Gastrocnemius medialis (tissue), 4 donors: ENCODE measurements at regions of chr19 and their contacts with region 1.

Region 1: DNA sequence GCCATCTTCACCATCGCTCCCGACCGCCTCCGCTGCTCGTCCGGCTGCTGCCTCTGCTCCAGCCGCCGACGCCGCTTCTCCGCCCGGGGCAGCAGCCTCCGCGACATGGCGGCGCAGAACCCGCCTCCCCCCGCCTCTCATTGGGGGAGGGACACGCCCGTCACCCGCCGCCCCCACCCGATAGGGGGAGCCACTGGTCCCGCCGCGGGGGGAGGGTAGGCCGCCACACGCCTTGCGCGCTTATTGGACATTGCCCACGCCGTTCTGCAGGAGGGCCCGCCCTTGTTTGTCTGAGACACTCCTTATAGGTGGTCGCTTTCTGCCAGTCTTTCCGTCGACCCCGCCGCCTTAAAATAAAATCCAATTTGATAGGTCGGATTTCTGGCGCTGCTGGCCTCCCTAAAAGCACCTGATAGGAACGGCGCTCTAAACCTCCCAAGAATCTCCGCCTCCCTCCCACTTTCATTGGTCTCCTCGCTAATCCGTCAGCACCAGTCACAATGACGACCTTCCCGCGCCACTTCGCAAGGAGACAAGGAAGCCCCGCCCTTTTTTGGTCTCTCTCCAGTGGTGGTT is at the start of gene HNRNPL:
- DNase-seq: peak in 1 of 2 donors; percentile 100
- ATAC-seq: peak in 1 of 2 donors; percentile 80
- H3K4me3 ChIP-seq: peak within 1 kb of the TSS; percentile 63 to 99 (median 92)
- H3K27ac ChIP-seq: peak within 1 kb of the TSS; percentile 98 to 100 (median 100)
- H3K4me1 ChIP-seq: peaks cover 45 to 52% of the 10 kb centered on the region in 2 donors
- H3K27me3 ChIP-seq: no peaks in the 10 kb centered on the region
- CTCF ChIP-seq: peak in 4 of 5 experiments; percentile 47 to 69 (median 55)
- POLR2A ChIP-seq: peak; percentile 98
- total RNA-seq, gene HNRNPL: 88.3 to 172 (median 126) TPM

Region 2: GRCh38 chr19:38374429-38375176 is 475.3 kb before region 1 on chr19 and contains the start of gene PSMD8:
- in situ Hi-C with region 1: loop called in 1 of 4 experiments (anchors 25 kb)
- intact Hi-C with region 1: no loop called
- DNase-seq: peak; percentile 99 to 100
- ATAC-seq: peak; percentile 81 to 88
- H3K4me3 ChIP-seq: peak within 1 kb of the TSS; percentile 91 to 99 (median 96)
- H3K27ac ChIP-seq: peak within 1 kb of the TSS; percentile 97 to 100 (median 98)
- H3K4me1 ChIP-seq: peaks cover 16 to 25% of the 10 kb centered on the region in 2 donors
- H3K27me3 ChIP-seq: no peaks in the 10 kb centered on the region
- CTCF ChIP-seq: peak in 3 of 5 experiments; percentile 6 to 34 (median 16)
- POLR2A ChIP-seq: peak; percentile 99
- total RNA-seq, gene PSMD8: 819 to 1,400 (median 1,309) TPM

Region 3: DNA sequence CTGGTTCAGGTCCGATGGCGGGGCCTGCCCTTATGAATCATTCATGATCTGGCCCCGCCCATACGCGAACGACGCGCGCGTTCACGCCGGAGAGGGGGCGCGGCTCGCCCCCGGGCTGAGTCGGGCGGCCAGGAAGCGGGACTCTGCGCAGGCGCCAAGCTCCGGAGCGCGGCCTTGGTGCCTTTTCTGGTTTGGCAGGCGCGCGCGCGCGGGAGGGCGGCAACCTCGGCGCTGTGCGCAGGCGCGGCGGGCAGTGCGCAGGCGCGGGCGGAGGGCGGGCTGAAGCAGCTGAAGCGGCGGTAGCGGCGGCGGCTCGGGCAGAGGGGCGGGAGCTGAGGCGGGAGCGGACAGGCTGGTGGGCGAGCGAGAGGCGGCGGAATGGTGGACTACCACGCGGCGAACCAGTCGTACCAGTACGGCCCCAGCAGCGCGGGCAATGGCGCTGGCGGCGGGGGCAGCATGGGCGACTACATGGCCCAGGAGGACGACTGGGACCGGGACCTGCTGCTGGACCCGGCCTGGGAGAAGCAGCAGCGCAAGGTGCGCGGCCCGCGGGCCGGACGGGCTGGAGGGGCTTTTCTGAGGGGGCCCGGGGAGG is 202.5 kb before region 1 on chr19 and contains the start of gene ACTN4:
- in situ Hi-C with region 1: loop called in 1 of 4 experiments (anchors 25 kb)
- intact Hi-C with region 1: no loop called
- DNase-seq: peak; percentile 97 to 98
- ATAC-seq: peak; percentile 68 to 81
- H3K4me3 ChIP-seq: peak within 1 kb of the TSS; percentile 90 to 100 (median 100)
- H3K27ac ChIP-seq: peak within 1 kb of the TSS; percentile 98 to 100 (median 99)
- H3K4me1 ChIP-seq: peaks cover 36 to 41% of the 10 kb centered on the region in 2 donors
- H3K27me3 ChIP-seq: no peaks in the 10 kb centered on the region
- CTCF ChIP-seq: no peak
- POLR2A ChIP-seq: peak; percentile 100
- total RNA-seq, gene ACTN4: 32.0 to 85.3 (median 63.9) TPM

Region 4: DNA sequence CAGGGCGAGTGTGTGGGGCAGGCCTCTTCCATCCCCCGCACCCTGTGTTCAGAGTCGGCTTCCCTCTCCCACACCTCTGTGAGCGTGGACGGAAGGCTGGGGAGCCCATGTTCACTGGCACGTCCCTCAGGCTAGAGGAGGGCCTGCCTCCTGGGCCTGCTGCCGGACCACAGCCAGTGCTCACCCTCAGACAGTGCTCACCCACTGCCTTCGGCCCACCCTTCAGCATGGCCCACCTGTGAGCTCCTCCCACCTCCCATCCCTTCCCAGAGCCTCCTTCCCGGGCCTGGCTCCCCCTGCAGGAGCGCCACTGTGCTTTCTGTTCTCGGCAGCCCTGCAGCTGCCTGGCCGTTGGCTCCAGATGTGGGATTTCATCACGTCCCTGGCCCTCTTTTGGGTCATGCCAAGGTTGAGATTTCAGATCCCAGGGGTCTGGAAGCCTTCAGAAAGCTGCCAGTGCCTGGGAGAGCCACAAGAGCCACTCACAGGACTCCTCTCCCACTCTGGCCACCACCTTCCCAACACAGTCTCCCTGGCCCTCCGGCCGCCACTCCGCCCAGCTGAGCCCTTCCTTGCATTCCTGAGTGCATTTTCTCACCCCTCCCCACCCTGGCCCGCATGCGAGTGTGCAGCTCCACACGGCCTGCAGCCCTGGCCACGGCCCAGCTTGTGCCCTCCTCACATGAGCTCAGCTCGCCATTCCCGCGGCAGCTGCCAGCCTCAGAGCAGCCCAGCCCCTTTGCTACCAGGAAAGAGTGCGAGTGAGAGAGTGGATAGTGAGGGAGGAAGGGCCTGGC is 131.0 kb before region 1 on chr19:
- in situ Hi-C with region 1: no loop called
- intact Hi-C with region 1: no loop called
- DNase-seq: peak in 1 of 2 donors; percentile 53
- ATAC-seq: peak in 1 of 2 donors; percentile 31
- H3K4me3 ChIP-seq: no peak overlapping the region
- H3K27ac ChIP-seq: peak overlapping the region; percentile 51 to 78 (median 60)
- H3K4me1 ChIP-seq: peaks cover 30 to 31% of the 10 kb centered on the region in 2 donors
- H3K27me3 ChIP-seq: no peaks in the 10 kb centered on the region
- CTCF ChIP-seq: peak in 4 of 5 experiments; percentile 16 to 42 (median 26)
- POLR2A ChIP-seq: no peak

Region 5: DNA sequence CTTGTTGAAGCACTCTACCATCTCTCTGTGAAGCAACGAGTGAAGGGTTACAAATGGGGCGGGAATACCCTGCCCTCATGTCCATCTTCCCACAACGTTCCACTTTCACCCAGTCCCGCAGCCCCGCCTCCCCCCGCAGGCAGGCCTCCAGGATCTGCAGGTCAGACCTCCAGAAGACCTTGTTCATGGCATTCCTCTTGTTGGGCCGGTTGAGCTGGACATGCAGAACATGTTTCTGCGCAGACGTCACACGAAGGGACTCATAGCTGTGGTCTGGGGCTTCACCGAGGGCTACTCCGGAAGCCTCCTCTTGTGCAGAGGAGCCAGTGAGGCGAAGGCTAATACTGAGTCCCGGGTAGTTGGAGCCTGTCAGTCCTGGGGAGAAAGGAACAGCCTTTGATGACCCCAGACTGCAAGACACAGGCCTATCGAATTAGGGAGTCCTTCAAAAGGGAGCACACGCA is 18.8 kb before region 1 on chr19:
- in situ Hi-C with region 1: no loop called
- intact Hi-C with region 1: loop called (anchors 1 kb)
- DNase-seq: peak in 1 of 2 donors; percentile 81
- ATAC-seq: peak; percentile 23 to 24
- H3K4me3 ChIP-seq: peak overlapping the region; percentile 63 to 83 (median 74)
- H3K27ac ChIP-seq: peak overlapping the region; percentile 91 to 100 (median 98)
- H3K4me1 ChIP-seq: peaks cover 49 to 60% of the 10 kb centered on the region in 2 donors
- H3K27me3 ChIP-seq: no peaks in the 10 kb centered on the region
- CTCF ChIP-seq: no peak
- POLR2A ChIP-seq: no peak

Region 6: GRCh38 chr19:38869856-38870607 is 20.1 kb after region 1 on chr19:
- in situ Hi-C with region 1: no loop called
- intact Hi-C with region 1: loop called (anchors 1 kb)
- DNase-seq: peak in 1 of 2 donors; percentile 79
- ATAC-seq: peak; percentile 64 to 79
- H3K4me3 ChIP-seq: peak overlapping the region; percentile 33 to 56 (median 48)
- H3K27ac ChIP-seq: peak overlapping the region; percentile 20 to 65 (median 47)
- H3K4me1 ChIP-seq: peaks cover 0 to 6% of the 10 kb centered on the region in 2 donors
- H3K27me3 ChIP-seq: no peaks in the 10 kb centered on the region
- CTCF ChIP-seq: peak; percentile 63 to 89 (median 77)
- POLR2A ChIP-seq: no peak

Region 7: GRCh38 chr19:39412100-39412866 is 562.3 kb after region 1 on chr19 and contains the start of gene PLEKHG2:
- in situ Hi-C with region 1: no loop called
- intact Hi-C with region 1: loop called (anchors 5 kb)
- DNase-seq: peak; percentile 97 to 98
- ATAC-seq: peak; percentile 63 to 73
- H3K4me3 ChIP-seq: peak within 1 kb of the TSS; percentile 81 to 99 (median 94)
- H3K27ac ChIP-seq: peak within 1 kb of the TSS; percentile 98 to 100 (median 100)
- H3K4me1 ChIP-seq: peaks cover 15 to 19% of the 10 kb centered on the region in 2 donors
- H3K27me3 ChIP-seq: no peaks in the 10 kb centered on the region
- CTCF ChIP-seq: peak; percentile 90 to 98 (median 97)
- POLR2A ChIP-seq: peak; percentile 70 to 87
- total RNA-seq, gene PLEKHG2: 1.3 to 3.6 (median 3.3) TPM